ENCODE measurements at regions of chr22 and their contacts with region 1.

Region 1: DNA sequence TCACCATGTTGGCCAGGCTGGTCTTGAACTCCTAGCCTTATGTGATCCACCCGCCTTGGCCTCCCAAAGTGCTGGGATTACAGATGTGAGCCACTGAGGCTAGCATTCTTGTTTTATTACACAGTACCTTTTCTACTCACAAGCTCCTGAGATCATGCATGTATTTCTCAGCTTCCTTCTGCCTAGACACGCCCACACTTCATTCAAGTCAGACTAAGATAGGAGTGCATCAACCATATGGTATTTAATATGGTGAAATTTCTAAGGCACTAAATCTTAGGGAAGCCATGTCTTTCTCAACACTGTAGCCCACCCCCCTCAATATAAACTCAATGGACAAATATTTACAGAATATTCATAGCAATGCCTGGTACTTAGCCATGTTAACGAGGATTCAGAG is 62.1 kb downstream of the SLC25A17 start:
- DNase-seq: no peak
- H3K4me3 ChIP-seq: no peak overlapping the region
- CTCF ChIP-seq: no peak

Region 2: GRCh38 chr22:40746428-40747220 is 10.4 kb before region 1 on chr22:
- CTCF ChIA-PET with region 1: interaction called, 45 read pairs
- POLR2A ChIA-PET with region 1: interaction called, 4 read pairs
- DNase-seq: no peak
- H3K4me3 ChIP-seq: no peak overlapping the region
- CTCF ChIP-seq: no peak

Region 3: GRCh38 chr22:40768206-40768605 is 11.1 kb after region 1 on chr22:
- CTCF ChIA-PET with region 1: interaction called, 10 read pairs
- POLR2A ChIA-PET with region 1: no interaction called
- DNase-seq: no peak
- H3K4me3 ChIP-seq: no peak overlapping the region
- CTCF ChIP-seq: no peak